HepG2 (cell line): ENCODE measurements at regions of chr1 and their contacts with region 1.

Region 1: GRCh38 chr1:180631766-180632325 is at the start of gene XPR1:
- DNase-seq: peak; percentile 96
- ATAC-seq: peak; percentile 98
- H3K4me3 ChIP-seq: peak within 1 kb of the TSS; percentile 93 to 99 (median 95)
- H3K27ac ChIP-seq: peak within 1 kb of the TSS; percentile 87
- H3K4me1 ChIP-seq: peaks cover 32% of the 10 kb centered on the region
- H3K27me3 ChIP-seq: no peaks in the 10 kb centered on the region
- CTCF ChIP-seq: 0 out of 2 replicates have a peak, but pooled peaks have one; percentile 26
- EP300 ChIP-seq: no peak
- POLR2A ChIP-seq: peak; percentile 64 to 71
- RAD21 ChIP-seq: peak; percentile 18; the same call in 1 of the 2 replicates
- total RNA-seq, gene XPR1: 23.6 and 24.2 TPM in 2 replicates

Region 2: GRCh38 chr1:180533266-180533987 is 98.4 kb before region 1 on chr1:
- CTCF ChIA-PET with region 1: no interaction called
- POLR2A ChIA-PET with region 1: no interaction called
- in situ Hi-C with region 1: no loop called
- intact Hi-C with region 1: loop called (anchors 2 kb)
- DNase-seq: peak; percentile 53
- ATAC-seq: peak; percentile 90
- H3K4me3 ChIP-seq: peak overlapping the region in 1 of 3 experiments; percentile 4; a peak in 2 of 6 replicates
- H3K27ac ChIP-seq: no peak overlapping the region
- H3K4me1 ChIP-seq: peaks cover 22% of the 10 kb centered on the region; the same call in 1 of the 2 replicates
- H3K27me3 ChIP-seq: peaks cover 2 to 4% of the 10 kb centered on the region in 2 experiments; a peak in 3 of 5 replicates
- CTCF ChIP-seq: peak; percentile 88
- EP300 ChIP-seq: no peak
- POLR2A ChIP-seq: no peak
- RAD21 ChIP-seq: peak; percentile 76

Region 3: GRCh38 chr1:180586671-180587155 is 45.1 kb before region 1 on chr1:
- CTCF ChIA-PET with region 1: no interaction called
- POLR2A ChIA-PET with region 1: interaction called, 11 read pairs
- in situ Hi-C with region 1: no loop called
- intact Hi-C with region 1: loop called (anchors 5 kb)
- DNase-seq: peak; percentile 85
- ATAC-seq: peak; percentile 90
- H3K4me3 ChIP-seq: no peak overlapping the region
- H3K27ac ChIP-seq: peak overlapping the region; percentile 53
- H3K4me1 ChIP-seq: peaks cover 45% of the 10 kb centered on the region
- H3K27me3 ChIP-seq: no peaks in the 10 kb centered on the region
- CTCF ChIP-seq: no peak
- EP300 ChIP-seq: peak in 1 of 2 experiments; percentile 71; a peak in 2 of 4 replicates
- POLR2A ChIP-seq: no peak
- RAD21 ChIP-seq: no peak

Region 4: GRCh38 chr1:180863158-180863775 is 231.4 kb after region 1 on chr1:
- CTCF ChIA-PET with region 1: no interaction called
- POLR2A ChIA-PET with region 1: no interaction called
- in situ Hi-C with region 1: no loop called
- intact Hi-C with region 1: loop called (anchors 5 kb)
- DNase-seq: peak; percentile 31
- ATAC-seq: no peak
- H3K4me3 ChIP-seq: no peak overlapping the region
- H3K27ac ChIP-seq: no peak overlapping the region
- H3K4me1 ChIP-seq: no peaks in the 10 kb centered on the region
- H3K27me3 ChIP-seq: no peaks in the 10 kb centered on the region
- CTCF ChIP-seq: peak; percentile 76
- EP300 ChIP-seq: no peak
- POLR2A ChIP-seq: no peak
- RAD21 ChIP-seq: peak; percentile 73